ENCODE measurements at regions of chr20 and their contacts with region 1.

Region 1: GRCh38 chr20:53750827-53751619 is 157.4 kb upstream of the ZNF217 start:
- DNase-seq: peak; percentile 12

Region 2: GRCh38 chr20:53915446-53916172 is 164.6 kb after region 1 on chr20:
- in situ Hi-C with region 1: loop called (anchors 25 kb)
- DNase-seq: peak; percentile 92

Region 3: DNA sequence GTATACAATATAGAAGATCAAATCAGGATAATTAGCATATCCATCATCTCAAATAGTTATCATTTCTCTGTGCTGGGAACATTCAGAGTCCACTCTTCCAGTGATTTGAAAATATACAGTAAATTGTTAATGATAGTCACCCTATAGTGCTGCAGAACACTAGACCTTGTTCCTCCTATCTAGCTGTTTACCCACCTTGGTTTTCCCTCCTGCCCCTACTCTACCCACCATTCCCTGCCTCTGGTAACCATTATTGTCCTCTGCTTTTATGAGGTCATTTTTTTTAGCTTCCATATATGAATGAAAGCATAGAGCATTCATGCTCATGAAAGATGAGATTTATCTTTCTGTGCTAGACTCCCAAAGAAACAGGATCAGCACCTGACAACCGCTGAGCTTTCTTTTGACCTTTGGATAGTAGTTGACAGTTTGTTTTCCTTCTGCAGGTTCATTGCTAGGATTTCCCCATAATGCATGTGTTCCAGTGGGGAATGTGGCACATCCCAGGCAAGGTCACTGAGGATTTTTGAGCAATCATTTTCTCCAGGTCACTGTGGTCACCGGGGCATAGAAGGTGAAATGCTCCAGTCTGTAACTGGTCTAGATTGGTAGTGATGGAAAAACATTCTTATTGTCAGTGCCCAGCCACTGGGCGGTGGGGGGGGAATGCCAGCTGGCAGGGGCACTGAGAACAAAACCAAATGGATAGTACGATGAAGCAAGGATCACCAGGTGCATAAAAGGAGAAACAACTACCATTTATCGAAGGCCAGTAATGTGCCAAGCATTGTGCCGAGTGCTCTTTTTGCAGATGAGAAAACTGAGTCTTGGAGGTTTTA is 353.0 kb after region 1 on chr20:
- in situ Hi-C with region 1: no loop called
- DNase-seq: no peak

Measured in ACHN (cell line).